ENCODE measurements at regions of chr11 and their contacts with region 1.

Region 1: GRCh38 chr11:64924102-64924851 is at the start of gene PPP2R5B:
- DNase-seq: peak; percentile 79 to 92 (median 89)
- ATAC-seq: peak; percentile 95
- H3K4me3 ChIP-seq: peak within 1 kb of the TSS; percentile 67
- H3K4me3 Mint-ChIP-seq: peak within 1 kb of the TSS; percentile 89 to 99 (median 96)
- H3K27ac ChIP-seq: peak within 1 kb of the TSS; percentile 81
- H3K27ac Mint-ChIP-seq: peak within 1 kb of the TSS; percentile 95 to 100 (median 98)
- H3K4me1 ChIP-seq: peaks cover 11 to 15% of the 10 kb centered on the region in 2 donors
- H3K4me1 Mint-ChIP-seq: peaks cover 9 to 24% (median 14%) of the 10 kb centered on the region in 7 donors
- H3K27me3 ChIP-seq: no peaks in the 10 kb centered on the region
- H3K27me3 Mint-ChIP-seq: no peaks in the 10 kb centered on the region
- total RNA-seq, gene PPP2R5B: 11.9 to 19.1 (median 18.8) TPM

Region 2: GRCh38 chr11:64713031-64713780 is 211.1 kb before region 1 on chr11:
- CTCF ChIA-PET with region 1: no interaction called
- POLR2A ChIA-PET with region 1: no interaction called
- intact Hi-C with region 1: no loop called
- DNase-seq: no peak
- ATAC-seq: peak; percentile 45
- H3K4me3 ChIP-seq: no peak overlapping the region
- H3K4me3 Mint-ChIP-seq: peak overlapping the region in 1 of 10 donors; percentile 18
- H3K27ac ChIP-seq: no peak overlapping the region
- H3K27ac Mint-ChIP-seq: no peak overlapping the region
- H3K4me1 ChIP-seq: peaks cover 0 to 4% of the 10 kb centered on the region in 2 donors
- H3K4me1 Mint-ChIP-seq: peaks cover 10 to 23% (median 19%) of the 10 kb centered on the region in 7 donors
- H3K27me3 ChIP-seq: peaks cover 2 to 20% of the 10 kb centered on the region in 2 donors
- H3K27me3 Mint-ChIP-seq: peaks cover 63 to 81% (median 76%) of the 10 kb centered on the region in 5 donors

Region 3: GRCh38 chr11:64810271-64810890 is 113.9 kb before region 1 on chr11 and contains the start of gene MEN1:
- CTCF ChIA-PET with region 1: no interaction called
- POLR2A ChIA-PET with region 1: no interaction called
- intact Hi-C with region 1: loop called in 1 of 2 experiments (anchors 1 kb)
- DNase-seq: peak; percentile 64 to 85 (median 81)
- ATAC-seq: peak; percentile 91
- H3K4me3 ChIP-seq: peak within 1 kb of the TSS; percentile 99
- H3K4me3 Mint-ChIP-seq: peak within 1 kb of the TSS; percentile 91 to 98 (median 96)
- H3K27ac ChIP-seq: peak within 1 kb of the TSS; percentile 97
- H3K27ac Mint-ChIP-seq: peak within 1 kb of the TSS; percentile 88 to 97 (median 94)
- H3K4me1 ChIP-seq: peaks cover 7 to 11% of the 10 kb centered on the region in 2 donors
- H3K4me1 Mint-ChIP-seq: peaks cover 23 to 34% (median 30%) of the 10 kb centered on the region in 7 donors
- H3K27me3 ChIP-seq: no peaks in the 10 kb centered on the region
- H3K27me3 Mint-ChIP-seq: peaks cover 0 to 6% (median 0%) of the 10 kb centered on the region in 5 donors
- total RNA-seq, gene MEN1: 25.7 to 46.4 (median 38.0) TPM

Region 4: DNA sequence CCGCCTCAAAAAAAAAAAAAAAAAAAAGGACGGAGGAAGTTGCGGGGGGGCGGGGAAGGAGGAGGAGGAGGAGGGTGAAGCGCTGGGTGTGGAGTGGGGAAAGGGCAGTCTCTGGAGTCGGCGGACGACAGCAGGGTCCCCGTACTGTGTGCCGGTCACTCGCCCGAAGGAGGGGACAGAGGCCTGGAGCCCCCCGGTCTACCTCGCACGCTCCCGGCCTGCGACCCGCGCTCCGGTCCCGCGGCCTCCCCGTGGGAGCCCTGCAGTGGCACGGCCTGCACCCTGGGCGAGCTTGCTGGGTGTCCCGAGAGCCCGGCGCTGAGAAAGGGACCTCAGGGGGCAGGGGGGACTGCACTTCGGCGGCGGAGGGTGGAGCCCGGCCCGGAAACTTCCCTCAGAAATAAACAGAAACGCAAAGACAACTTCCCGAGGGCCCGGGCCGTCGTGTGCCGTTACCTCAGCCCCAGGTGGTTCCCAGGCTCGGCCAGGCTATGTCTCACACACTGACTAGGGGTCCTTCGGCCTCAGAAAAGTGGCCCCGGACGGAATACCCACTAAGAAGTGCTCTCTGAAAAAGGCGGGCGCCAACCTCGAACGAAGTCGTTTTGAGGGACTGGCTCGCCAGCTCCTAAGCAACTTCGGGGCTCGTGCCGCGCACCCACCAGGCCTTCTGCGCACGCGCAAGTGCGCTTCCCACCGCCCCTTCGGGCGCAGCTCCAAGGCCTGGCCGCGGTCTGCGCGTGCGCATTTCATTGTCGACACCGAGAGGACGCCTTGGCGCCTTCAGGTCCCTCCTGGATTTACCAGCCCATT is 47.4 kb after region 1 on chr11 and contains the start of gene MAJIN:
- CTCF ChIA-PET with region 1: no interaction called
- POLR2A ChIA-PET with region 1: no interaction called
- intact Hi-C with region 1: loop called in 1 of 2 experiments (anchors 1 kb)
- DNase-seq: peak; percentile 80 to 92 (median 87)
- ATAC-seq: peak; percentile 86
- H3K4me3 ChIP-seq: peak within 1 kb of the TSS; percentile 32
- H3K4me3 Mint-ChIP-seq: peak within 1 kb of the TSS; percentile 60 to 87 (median 78)
- H3K27ac ChIP-seq: peak within 1 kb of the TSS; percentile 63
- H3K27ac Mint-ChIP-seq: peak within 1 kb of the TSS; percentile 70 to 91 (median 83)
- H3K4me1 ChIP-seq: peaks cover 0 to 8% of the 10 kb centered on the region in 2 donors
- H3K4me1 Mint-ChIP-seq: peaks cover 0 to 23% (median 14%) of the 10 kb centered on the region in 7 donors
- H3K27me3 ChIP-seq: no peaks in the 10 kb centered on the region
- H3K27me3 Mint-ChIP-seq: no peaks in the 10 kb centered on the region
- total RNA-seq, gene MAJIN: 0.48 to 1.1 (median 0.85) TPM in 4 of 5 experiments, not detected in the other

Region 5: GRCh38 chr11:65083834-65084597 is 159.7 kb after region 1 on chr11 and contains the starts of genes CDCA5 and ZFPL1:
- CTCF ChIA-PET with region 1: no interaction called
- POLR2A ChIA-PET with region 1: no interaction called
- intact Hi-C with region 1: loop called (anchors 1 kb)
- DNase-seq: peak; percentile 94 to 98 (median 97)
- ATAC-seq: peak; percentile 96
- H3K4me3 ChIP-seq: peak within 1 kb of the TSS; percentile 61
- H3K4me3 Mint-ChIP-seq: peak within 1 kb of the TSS; percentile 88 to 99 (median 93)
- H3K27ac ChIP-seq: peak within 1 kb of the TSS; percentile 86
- H3K27ac Mint-ChIP-seq: peak within 1 kb of the TSS; percentile 94 to 99 (median 97)
- H3K4me1 ChIP-seq: peaks cover 13 to 14% of the 10 kb centered on the region in 2 donors
- H3K4me1 Mint-ChIP-seq: peaks cover 20 to 49% (median 27%) of the 10 kb centered on the region in 7 donors
- H3K27me3 ChIP-seq: no peaks in the 10 kb centered on the region
- H3K27me3 Mint-ChIP-seq: peaks cover 0 to 4% (median 0%) of the 10 kb centered on the region in 5 donors
- total RNA-seq, gene CDCA5: 0.56 to 68.1 (median 0.81) TPM
- total RNA-seq, gene ZFPL1: 29.9 to 53.0 (median 49.3) TPM

Region 6: DNA sequence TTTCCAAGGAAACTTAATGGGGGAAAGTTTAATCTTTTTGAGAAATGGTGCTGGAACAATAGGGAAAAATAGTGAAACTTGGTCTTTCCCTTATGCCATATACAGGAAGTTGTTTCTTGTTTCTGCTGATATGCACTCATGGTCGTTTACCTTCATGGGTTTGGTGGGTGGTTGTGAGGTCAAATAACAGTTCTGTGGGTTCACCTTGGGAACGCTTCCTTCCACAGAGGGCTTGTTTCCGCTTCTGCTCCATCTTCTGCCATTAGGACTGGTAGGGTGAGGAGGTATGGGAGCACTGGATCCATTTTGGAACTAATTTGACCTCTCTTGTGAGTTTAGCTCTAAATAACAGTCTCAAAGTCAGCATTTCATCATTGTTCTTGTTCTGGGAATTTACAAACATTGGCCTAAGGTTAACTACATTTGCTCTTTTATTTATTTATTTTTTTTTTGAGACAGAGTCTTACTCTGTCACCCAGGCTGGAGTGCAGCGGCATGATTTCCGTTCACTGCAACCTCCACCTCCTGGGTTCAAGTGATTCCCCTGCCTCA is 756.0 kb after region 1 on chr11:
- CTCF ChIA-PET with region 1: no interaction called
- POLR2A ChIA-PET with region 1: no interaction called
- intact Hi-C with region 1: no loop called
- DNase-seq: no peak
- ATAC-seq: no peak
- H3K4me3 ChIP-seq: no peak overlapping the region
- H3K4me3 Mint-ChIP-seq: no peak overlapping the region
- H3K27ac ChIP-seq: no peak overlapping the region
- H3K27ac Mint-ChIP-seq: no peak overlapping the region
- H3K4me1 ChIP-seq: no peaks in the 10 kb centered on the region
- H3K4me1 Mint-ChIP-seq: no peaks in the 10 kb centered on the region
- H3K27me3 ChIP-seq: no peaks in the 10 kb centered on the region
- H3K27me3 Mint-ChIP-seq: peaks cover 0 to 18% (median 0%) of the 10 kb centered on the region in 5 donors

Measured in naive thymus-derived CD4-positive, alpha-beta T cell (primary cell).